ENCODE measurements at regions of chr9 and their contacts with region 1.

Region 1: DNA sequence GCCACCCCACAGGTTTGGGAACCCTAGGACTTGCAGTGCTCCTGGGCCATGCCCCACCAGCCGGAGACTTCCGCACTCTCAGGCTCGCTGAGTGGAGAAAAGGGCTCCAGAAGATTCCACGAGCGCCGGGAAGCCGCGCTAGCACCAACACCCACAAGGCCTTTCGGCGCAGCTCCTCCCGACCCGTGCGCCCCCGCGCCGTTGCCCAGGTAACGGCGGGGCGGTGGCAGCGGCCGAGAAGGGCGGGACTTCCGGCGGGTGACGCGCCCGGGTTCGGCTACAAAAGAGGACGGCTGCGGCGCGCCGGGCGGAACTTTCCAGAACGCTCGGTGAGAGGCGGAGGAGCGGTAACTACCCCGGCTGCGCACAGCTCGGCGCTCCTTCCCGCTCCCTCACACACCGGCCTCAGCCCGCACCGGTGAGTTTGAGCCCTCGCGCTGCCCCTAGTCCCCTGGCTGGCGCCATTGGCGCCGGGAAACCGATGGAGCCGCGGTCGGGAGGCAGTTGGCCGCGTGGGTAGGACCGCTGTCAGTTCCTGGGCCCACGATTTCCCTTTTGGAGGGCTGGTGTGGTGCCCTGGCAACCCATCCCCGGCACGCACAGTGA is at the start of gene DNAJA1:
- DNase-seq: peak; percentile 79 to 95
- ATAC-seq: peak; percentile 89 to 94
- H3K4me3 ChIP-seq: peak within 1 kb of the TSS; percentile 98
- H3K27ac ChIP-seq: peak within 1 kb of the TSS; percentile 99
- H3K4me1 ChIP-seq: peaks cover 58% of the 10 kb centered on the region
- CTCF ChIP-seq: no peak
- EP300 ChIP-seq: no peak
- POLR2A ChIP-seq: peak; percentile 95
- RAD21 ChIP-seq: no peak
- polyA plus RNA-seq, gene DNAJA1: 241 and 258 TPM in 2 replicates

Region 2: DNA sequence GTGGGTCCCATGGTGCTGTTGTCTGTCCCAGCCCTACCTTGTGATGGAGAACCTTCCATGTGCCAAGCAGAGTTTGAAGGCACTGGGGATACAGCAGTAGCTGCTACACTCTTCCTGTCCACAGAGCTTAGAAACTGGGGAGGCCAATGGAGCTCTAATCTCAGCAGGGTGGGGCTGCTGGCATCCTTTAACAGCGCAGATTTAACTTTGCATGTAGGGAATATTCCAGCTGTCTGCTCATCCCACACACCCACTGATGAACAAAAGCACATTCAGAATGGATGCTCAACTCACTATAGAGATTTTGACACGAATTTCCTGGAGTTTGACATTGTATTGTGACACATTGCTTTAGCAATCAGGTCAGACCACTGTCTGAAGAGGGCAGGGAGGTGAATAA is 192.7 kb before region 1 on chr9:
- CTCF ChIA-PET with region 1: no interaction called
- POLR2A ChIA-PET with region 1: no interaction called
- DNase-seq: no peak
- ATAC-seq: no peak
- H3K4me3 ChIP-seq: no peak overlapping the region
- H3K27ac ChIP-seq: no peak overlapping the region
- H3K4me1 ChIP-seq: no peaks in the 10 kb centered on the region
- CTCF ChIP-seq: no peak
- EP300 ChIP-seq: no peak
- POLR2A ChIP-seq: no peak
- RAD21 ChIP-seq: no peak

Region 3: DNA sequence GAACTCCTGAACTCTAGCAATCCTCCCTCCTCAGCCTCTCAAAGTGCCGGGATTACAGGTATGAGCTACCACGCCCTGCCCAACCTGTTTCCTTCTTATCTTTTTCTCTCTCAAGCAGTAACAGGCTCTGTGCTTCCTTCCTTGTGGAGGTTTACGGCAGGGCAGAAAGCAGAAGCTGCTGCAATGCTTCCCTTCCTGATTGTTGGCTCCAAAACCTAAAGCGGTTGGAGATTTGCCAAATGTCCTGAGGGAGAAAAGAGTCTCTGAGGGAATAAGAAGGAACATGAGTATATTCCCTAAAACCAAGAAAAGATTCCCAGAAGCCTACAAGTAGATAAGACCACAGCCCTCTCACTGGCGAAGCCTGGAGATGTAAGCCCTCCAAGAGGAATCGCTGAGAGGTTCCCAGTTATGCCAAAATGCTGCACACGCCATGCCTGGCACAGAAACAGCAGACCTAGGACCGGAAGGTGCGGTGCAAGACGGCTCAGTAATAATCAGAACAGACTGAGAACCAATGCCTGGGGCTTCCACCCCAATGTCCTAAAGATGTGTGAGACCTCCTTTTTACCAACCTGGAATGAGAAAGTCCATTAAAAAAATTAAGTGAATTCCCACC is 96.8 kb before region 1 on chr9:
- CTCF ChIA-PET with region 1: no interaction called
- POLR2A ChIA-PET with region 1: no interaction called
- DNase-seq: no peak
- ATAC-seq: no peak
- H3K4me3 ChIP-seq: no peak overlapping the region
- H3K27ac ChIP-seq: no peak overlapping the region
- H3K4me1 ChIP-seq: no peaks in the 10 kb centered on the region
- CTCF ChIP-seq: no peak
- EP300 ChIP-seq: no peak
- POLR2A ChIP-seq: no peak
- RAD21 ChIP-seq: no peak

Region 4: GRCh38 chr9:33012328-33013069 is 12.6 kb before region 1 on chr9:
- CTCF ChIA-PET with region 1: interaction called, 4 read pairs
- POLR2A ChIA-PET with region 1: interaction called, 41 read pairs
- DNase-seq: no peak
- ATAC-seq: peak; percentile 31 to 35; a peak in 1 of 6 replicates
- H3K4me3 ChIP-seq: no peak overlapping the region
- H3K27ac ChIP-seq: no peak overlapping the region
- H3K4me1 ChIP-seq: no peaks in the 10 kb centered on the region
- CTCF ChIP-seq: no peak
- EP300 ChIP-seq: no peak
- POLR2A ChIP-seq: no peak
- RAD21 ChIP-seq: no peak

Region 5: GRCh38 chr9:33044127-33044673 is 19.1 kb after region 1 on chr9:
- CTCF ChIA-PET with region 1: interaction called, 59 read pairs
- POLR2A ChIA-PET with region 1: interaction called, 58 read pairs
- DNase-seq: peak; percentile 87 to 94
- ATAC-seq: peak; percentile 90 to 91
- H3K4me3 ChIP-seq: peak overlapping the region; percentile 54
- H3K27ac ChIP-seq: peak overlapping the region; percentile 79 to 86
- H3K4me1 ChIP-seq: peaks cover 31% of the 10 kb centered on the region
- CTCF ChIP-seq: no peak
- EP300 ChIP-seq: no peak
- POLR2A ChIP-seq: peak; percentile 37
- RAD21 ChIP-seq: no peak; a peak in 1 of 5 replicates

Region 6: DNA sequence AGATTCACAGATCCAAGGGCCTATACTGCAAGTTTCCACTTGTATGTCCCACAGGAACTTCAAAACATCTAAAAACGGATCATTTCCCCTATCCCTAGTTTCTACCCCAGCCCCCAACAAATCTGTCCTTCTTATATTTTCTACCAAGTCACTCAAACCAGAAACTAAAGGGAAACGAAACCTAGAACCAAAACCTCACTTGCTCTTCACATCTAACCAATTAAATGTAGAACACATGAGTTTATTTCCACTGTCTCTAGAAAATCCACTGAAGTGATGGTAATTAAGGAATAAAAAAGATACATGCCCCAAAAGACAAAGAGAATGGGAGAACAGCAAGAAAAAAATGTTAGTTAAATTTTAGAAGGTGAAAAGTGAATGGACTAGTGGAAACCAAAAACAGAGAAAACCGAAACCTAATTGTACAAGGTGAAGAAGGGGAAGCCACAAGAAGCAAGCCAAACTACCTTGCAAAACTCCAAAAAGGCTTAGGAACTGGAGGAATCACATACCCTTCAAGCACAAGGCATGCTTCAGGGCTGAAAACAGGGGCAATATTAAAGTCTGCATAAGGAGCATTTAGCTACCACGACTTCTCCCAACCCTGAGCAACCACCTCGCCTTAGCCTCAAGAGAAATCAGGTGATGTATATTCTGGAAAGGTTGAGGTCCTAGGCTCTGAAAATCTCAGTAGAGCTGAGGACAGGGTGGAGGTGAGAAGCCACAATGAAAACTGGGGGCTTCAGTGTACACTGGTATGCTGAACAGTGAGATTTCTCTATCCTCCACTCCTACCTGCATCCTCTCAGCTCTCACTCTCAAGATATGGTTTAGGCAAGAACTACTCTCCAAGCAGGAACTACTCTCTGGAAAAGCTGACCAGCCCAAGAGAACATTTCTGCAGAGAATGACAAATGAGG is 40.3 kb after region 1 on chr9:
- CTCF ChIA-PET with region 1: interaction called, 3 read pairs
- POLR2A ChIA-PET with region 1: interaction called, 11 read pairs
- DNase-seq: no peak
- ATAC-seq: no peak; a peak in 1 of 6 replicates
- H3K4me3 ChIP-seq: no peak overlapping the region
- H3K27ac ChIP-seq: no peak overlapping the region
- H3K4me1 ChIP-seq: no peaks in the 10 kb centered on the region
- CTCF ChIP-seq: no peak
- EP300 ChIP-seq: no peak
- POLR2A ChIP-seq: no peak
- RAD21 ChIP-seq: no peak

Region 7: DNA sequence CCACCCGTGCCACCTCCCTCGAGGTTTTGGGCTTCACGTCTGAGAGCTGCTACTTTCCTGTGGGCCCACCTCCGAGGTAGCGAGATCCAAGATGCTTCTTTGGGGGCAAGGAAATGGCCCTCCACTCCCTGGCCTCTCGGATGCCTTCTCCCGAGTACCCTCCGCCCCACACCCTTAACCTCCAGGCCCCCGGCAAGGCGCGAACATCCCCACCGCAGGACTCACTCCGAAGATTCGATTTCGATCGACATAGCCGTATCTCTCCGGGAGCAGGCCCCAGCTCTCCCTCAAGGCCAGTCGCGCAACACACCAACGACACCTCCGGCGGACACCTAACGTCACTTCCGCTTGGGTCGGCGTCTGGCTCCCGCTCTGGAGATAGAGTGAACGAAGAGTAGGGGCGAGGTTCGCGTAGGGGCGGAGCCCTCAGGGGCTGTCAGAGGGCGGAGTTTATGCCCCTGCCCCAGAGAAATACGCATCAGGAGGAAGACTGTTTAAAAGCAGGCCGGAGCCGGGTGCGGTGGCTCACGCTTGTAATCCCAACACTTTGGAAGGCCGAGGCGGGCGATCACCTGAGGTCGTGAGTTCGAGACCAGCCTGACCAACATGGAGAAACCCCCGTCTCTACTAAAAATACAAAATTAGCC is 51.4 kb after region 1 on chr9 and contains the start of gene SMU1:
- CTCF ChIA-PET with region 1: no interaction called
- POLR2A ChIA-PET with region 1: interaction called, 12 read pairs
- DNase-seq: peak; percentile 96 to 99
- ATAC-seq: peak; percentile 97 to 99
- H3K4me3 ChIP-seq: peak within 1 kb of the TSS; percentile 71
- H3K27ac ChIP-seq: peak within 1 kb of the TSS; percentile 82 to 93
- H3K4me1 ChIP-seq: peaks cover 14% of the 10 kb centered on the region; the same call in 2 of the 3 replicates
- CTCF ChIP-seq: no peak
- EP300 ChIP-seq: no peak
- POLR2A ChIP-seq: peak; percentile 70
- RAD21 ChIP-seq: no peak
- polyA plus RNA-seq, gene SMU1: 25.3 and 26.0 TPM in 2 replicates